Psoas muscle (tissue), 8 donors: ENCODE measurements at regions of chr1 and their contacts with region 1.

Region 1: GRCh38 chr1:63917571-63918417 is 144.0 kb downstream of the ROR1 start:
- DNase-seq: no peak
- ATAC-seq: peak in 1 of 4 donors; percentile 36
- H3K4me3 ChIP-seq: no peak overlapping the region
- H3K27ac ChIP-seq: no peak overlapping the region
- H3K4me1 ChIP-seq: peaks cover 10% of the 10 kb centered on the region
- H3K27me3 ChIP-seq: no peaks in the 10 kb centered on the region
- CTCF ChIP-seq: no peak

Region 2: GRCh38 chr1:63773815-63774616 is 143.8 kb before region 1 on chr1 and contains the start of gene ROR1:
- intact Hi-C with region 1: loop called (anchors 5 to 10 kb)
- DNase-seq: peak; percentile 88 to 93
- ATAC-seq: peak; percentile 98 to 99 (median 98)
- H3K4me3 ChIP-seq: peak within 1 kb of the TSS; percentile 83
- H3K27ac ChIP-seq: peak within 1 kb of the TSS; percentile 87
- H3K4me1 ChIP-seq: peaks cover 15% of the 10 kb centered on the region
- H3K27me3 ChIP-seq: peaks cover 0 to 7% (median 0%) of the 10 kb centered on the region in 3 donors
- CTCF ChIP-seq: peak; percentile 61
- total RNA-seq, gene ROR1: 1.2 to 2.8 (median 2.0) TPM

Region 3: DNA sequence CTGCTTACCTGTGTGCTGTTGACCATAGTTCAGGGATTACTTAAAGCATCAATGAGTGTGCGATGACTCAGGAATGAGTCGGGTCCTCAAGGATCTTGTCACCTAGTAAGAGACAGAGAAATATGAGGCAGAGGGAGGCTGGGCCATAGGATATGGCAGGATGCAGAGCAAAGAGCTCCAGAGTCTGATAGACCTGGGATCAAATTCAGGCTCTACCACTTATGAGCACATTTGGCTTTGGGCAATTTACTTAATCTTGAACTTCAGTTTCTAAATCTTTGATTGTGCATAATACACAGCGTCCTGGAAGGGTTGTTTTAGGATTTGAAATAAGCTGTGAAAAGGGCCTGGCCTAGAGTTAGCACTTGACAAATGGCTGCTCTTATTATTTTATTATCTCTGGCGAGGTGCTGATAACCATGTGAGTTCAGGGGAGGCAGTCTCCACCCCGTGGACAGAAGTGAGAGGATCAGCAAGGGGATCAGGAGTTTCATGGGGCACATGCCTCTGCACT is 49.5 kb before region 1 on chr1:
- intact Hi-C with region 1: no loop called
- DNase-seq: no peak
- ATAC-seq: peak in 3 of 4 donors; percentile 27 to 66 (median 63)
- H3K4me3 ChIP-seq: no peak overlapping the region
- H3K27ac ChIP-seq: no peak overlapping the region
- H3K4me1 ChIP-seq: peaks cover 7% of the 10 kb centered on the region
- H3K27me3 ChIP-seq: no peaks in the 10 kb centered on the region
- CTCF ChIP-seq: no peak

Region 4: DNA sequence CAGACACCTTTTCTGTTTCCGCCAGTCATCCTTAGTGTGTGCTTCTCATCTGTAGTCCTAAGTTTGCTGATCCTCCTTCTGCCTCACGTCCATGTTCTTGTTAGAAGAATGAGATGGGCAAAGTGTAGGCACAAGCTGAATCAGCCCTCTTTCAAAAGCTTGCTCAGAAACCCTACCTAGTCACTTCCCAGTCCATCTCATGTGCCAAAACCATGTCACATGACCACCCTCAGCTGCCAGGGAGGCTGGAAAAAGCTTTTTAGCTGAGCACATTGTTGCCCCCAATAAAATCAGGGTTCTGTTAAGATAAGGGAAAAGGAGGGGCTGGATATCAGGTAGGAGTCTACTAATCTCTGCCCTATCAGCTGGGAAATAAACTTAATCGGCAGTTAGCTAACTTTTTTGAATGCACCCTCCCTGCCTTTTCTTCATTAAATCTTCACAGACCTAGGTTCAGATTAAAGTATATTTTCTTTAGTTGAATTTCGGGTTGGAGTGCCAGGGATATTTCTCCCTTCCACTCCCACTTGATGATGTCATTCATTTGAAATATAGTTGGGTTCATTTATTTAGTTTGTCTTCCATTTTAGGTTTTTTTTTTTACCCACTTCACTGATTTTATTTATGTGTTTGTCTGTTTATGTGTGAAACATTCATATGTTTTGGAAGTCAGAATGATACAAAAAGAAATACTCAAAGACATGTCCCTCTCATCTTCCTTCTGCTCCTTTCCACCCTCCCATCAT is 14.8 kb before region 1 on chr1:
- intact Hi-C with region 1: no loop called
- DNase-seq: no peak
- ATAC-seq: peak in 2 of 4 donors; percentile 63 to 73
- H3K4me3 ChIP-seq: no peak overlapping the region
- H3K27ac ChIP-seq: no peak overlapping the region
- H3K4me1 ChIP-seq: peaks cover 15% of the 10 kb centered on the region
- H3K27me3 ChIP-seq: peaks cover 0 to 2% (median 0%) of the 10 kb centered on the region in 3 donors
- CTCF ChIP-seq: no peak